A673 (cell line): ENCODE measurements at regions of chr13 and their contacts with region 1.

Region 1: DNA sequence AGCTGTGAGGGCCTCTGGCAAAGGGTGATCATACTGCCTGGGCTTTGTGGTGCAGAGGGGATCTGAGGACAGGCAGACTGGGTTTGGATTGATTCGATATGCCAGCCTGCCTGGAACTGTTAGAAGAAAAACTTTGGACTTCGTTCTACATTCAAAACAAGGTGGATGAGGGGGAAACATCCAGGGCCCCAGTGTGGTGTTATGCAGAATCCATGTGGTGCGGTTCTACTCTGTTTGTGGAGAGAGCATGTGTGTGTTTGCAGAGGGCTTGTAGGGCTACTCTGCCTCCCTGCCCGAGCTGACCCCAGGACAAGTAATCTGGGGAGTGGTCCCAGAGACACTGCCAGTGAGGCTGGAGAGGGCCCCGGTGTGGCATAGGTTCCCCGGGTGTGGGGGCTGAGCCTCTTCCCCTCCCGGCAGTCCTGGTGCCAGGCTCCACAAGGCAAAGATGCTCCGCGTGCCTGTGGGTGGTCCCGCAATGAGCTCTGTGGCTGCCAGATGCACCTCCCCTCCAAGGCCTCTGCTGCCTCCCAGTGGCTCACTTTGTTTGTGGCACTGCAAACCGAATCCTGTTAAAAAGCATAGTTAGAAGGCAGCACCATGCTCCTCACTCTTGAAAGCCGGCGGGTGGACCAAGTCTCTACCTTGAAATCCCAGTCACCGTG is 22.3 kb upstream of the TFDP1 start:
- DNase-seq: peak; percentile 90
- H3K4me3 ChIP-seq: no peak overlapping the region
- H3K27ac ChIP-seq: no peak overlapping the region
- H3K4me1 ChIP-seq: no peaks in the 10 kb centered on the region
- H3K27me3 ChIP-seq: no peaks in the 10 kb centered on the region
- CTCF ChIP-seq: peak; percentile 86

Region 2: DNA sequence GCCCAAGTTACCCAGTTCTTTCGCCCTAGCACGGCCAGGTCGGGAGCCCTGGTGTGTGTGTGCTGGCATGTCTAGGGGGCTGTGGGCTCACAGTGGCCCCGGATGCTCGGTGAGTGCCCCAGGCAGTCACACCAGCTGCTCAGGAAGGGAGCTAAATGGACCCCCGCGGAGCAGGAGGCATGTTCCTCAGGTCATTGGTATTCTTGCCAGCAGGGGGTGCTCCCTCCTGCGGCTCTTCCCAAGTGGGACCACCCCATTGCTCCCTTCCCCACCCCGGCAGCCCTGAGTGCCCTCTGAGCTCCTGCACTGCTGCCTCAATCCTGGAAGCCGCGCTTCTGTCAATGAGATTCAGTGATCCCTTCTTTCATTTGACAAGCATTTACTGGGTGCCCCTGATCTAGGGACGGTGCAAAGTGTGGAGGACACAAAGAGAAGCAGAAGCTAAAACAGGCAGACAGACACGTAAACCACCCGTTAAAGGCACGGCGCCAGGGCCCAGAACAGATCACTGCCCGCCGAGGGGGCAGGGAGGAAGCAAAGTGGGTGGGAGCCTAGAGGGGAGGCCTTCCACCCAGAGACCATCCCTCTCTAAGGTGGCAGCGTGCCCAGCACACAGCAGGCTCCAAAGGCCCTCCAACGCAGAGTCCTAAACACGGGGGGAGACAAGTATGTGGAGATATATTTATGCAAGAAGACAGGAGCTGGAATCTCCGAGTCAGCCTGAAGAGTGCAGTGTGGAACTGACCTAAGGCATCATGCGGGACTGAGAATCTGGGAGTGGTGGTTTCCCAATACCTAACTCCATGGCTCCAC is 103.8 kb before region 1 on chr13:
- CTCF ChIA-PET with region 1: interaction called, 20 read pairs
- POLR2A ChIA-PET with region 1: no interaction called
- intact Hi-C with region 1: loop called (anchors 1 kb)
- DNase-seq: peak; percentile 93
- H3K4me3 ChIP-seq: peak overlapping the region; percentile 3
- H3K27ac ChIP-seq: peak overlapping the region; percentile 80
- H3K4me1 ChIP-seq: peaks cover 35% of the 10 kb centered on the region
- H3K27me3 ChIP-seq: no peaks in the 10 kb centered on the region
- CTCF ChIP-seq: peak; percentile 44